IMR-90 (cell line): ENCODE measurements at regions of chr19 and their contacts with region 1.

Region 1: GRCh38 chr19:12564016-12564664 is 12.9 kb upstream of the ZNF564 start:
- DNase-seq: peak; percentile 88
- ATAC-seq: peak; percentile 100
- H3K4me3 ChIP-seq: no peak overlapping the region
- H3K27ac ChIP-seq: no peak overlapping the region
- H3K4me1 ChIP-seq: no peaks in the 10 kb centered on the region
- H3K27me3 ChIP-seq: no peaks in the 10 kb centered on the region; the same call in 1 of the 2 replicates
- CTCF ChIP-seq: peak; percentile 97
- POLR2A ChIP-seq: 0 out of 2 replicates have a peak, but pooled peaks have one; percentile 27
- RAD21 ChIP-seq: peak; percentile 94

Region 2: DNA sequence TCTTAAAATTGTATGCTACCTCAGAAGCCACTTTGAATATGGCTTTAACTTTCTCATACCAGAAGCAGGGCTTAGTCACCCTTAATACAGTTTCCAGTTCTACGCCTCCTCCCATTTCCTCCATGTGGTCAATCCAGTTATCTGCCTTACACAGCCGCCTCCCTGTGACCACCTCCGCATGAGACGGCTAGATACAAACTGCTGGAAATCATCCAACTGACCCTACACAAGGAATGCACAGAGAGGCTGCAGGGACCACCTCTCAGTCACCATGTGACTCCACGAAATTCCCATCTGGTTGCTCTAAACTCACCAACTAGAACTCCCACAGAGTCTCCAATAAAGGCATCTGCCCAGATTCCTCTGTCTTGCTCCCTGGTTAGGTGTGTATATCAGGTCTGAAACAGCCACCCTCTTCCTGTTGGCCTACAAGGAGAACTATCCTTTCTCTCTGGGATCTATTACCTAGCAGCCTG is 19.7 kb before region 1 on chr19:
- CTCF ChIA-PET with region 1: no interaction called
- POLR2A ChIA-PET with region 1: no interaction called
- dilution Hi-C with region 1: no loop called
- in situ Hi-C with region 1: no loop called
- intact Hi-C with region 1: no loop called
- DNase-seq: peak; percentile 19
- ATAC-seq: peak; percentile 21; the same call in 1 of the 2 replicates
- H3K4me3 ChIP-seq: no peak overlapping the region
- H3K27ac ChIP-seq: no peak overlapping the region
- H3K4me1 ChIP-seq: no peaks in the 10 kb centered on the region
- H3K27me3 ChIP-seq: no peaks in the 10 kb centered on the region
- CTCF ChIP-seq: no peak
- POLR2A ChIP-seq: no peak
- RAD21 ChIP-seq: no peak

Region 3: GRCh38 chr19:12603714-12604113 is 39.6 kb after region 1 on chr19:
- CTCF ChIA-PET with region 1: no interaction called
- POLR2A ChIA-PET with region 1: no interaction called
- dilution Hi-C with region 1: no loop called
- in situ Hi-C with region 1: no loop called
- intact Hi-C with region 1: no loop called
- DNase-seq: peak; percentile 67
- ATAC-seq: peak; percentile 77
- H3K4me3 ChIP-seq: no peak overlapping the region
- H3K27ac ChIP-seq: no peak overlapping the region
- H3K4me1 ChIP-seq: no peaks in the 10 kb centered on the region
- H3K27me3 ChIP-seq: no peaks in the 10 kb centered on the region
- CTCF ChIP-seq: no peak
- POLR2A ChIP-seq: no peak
- RAD21 ChIP-seq: no peak

Region 4: DNA sequence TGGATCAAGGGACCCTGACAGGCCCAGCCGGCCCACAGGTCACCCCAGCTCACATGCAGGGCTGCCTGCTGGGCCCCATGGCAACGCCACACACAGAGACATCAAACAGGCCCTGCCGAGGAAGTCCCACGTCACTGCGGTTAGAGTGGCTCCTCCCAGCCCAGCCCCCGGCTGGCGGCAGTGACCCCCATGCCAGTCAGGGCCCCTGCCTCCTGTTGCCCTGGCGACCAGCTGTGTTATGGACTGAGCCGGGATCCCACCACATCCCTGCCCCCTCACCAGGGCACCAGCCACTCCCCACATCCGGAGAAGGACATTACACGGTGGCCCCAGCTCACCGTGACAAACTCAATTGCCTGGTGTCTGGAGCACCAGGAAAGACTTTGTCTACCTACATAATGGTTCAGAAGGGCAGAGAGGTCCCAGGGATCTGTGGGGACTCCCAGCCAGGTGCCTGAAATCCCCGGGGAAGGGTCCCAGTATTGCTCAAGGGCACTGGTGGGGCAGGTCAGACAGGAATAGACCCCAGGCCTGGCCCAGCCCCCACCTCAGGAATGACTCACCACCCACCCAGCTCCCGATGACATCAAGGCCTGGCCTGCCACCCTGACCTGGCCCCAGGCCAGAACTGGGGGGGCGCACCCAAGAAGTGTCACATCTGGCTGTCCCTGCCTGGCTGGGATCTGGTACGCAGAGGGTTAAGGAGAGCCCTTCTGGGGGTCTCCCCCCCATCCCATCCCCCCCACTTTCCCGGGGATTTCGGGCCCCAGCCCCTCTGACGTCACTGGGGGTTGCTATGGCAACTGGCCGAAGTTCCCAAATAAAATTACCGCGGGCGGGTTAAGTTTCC is 1282.6 kb after region 1 on chr19:
- CTCF ChIA-PET with region 1: no interaction called
- POLR2A ChIA-PET with region 1: interaction called, 12 read pairs
- dilution Hi-C with region 1: no loop called
- in situ Hi-C with region 1: no loop called
- intact Hi-C with region 1: no loop called
- DNase-seq: peak; percentile 93
- ATAC-seq: peak; percentile 13
- H3K4me3 ChIP-seq: peak overlapping the region; percentile 6; the same call in 1 of the 2 replicates
- H3K27ac ChIP-seq: peak overlapping the region; percentile 99
- H3K4me1 ChIP-seq: peaks cover 39% of the 10 kb centered on the region
- H3K27me3 ChIP-seq: no peaks in the 10 kb centered on the region
- CTCF ChIP-seq: no peak
- POLR2A ChIP-seq: no peak
- RAD21 ChIP-seq: 0 out of 2 replicates have a peak, but pooled peaks have one; percentile 12